Activated CD8-positive, alpha-beta T cell treated with anti-CD3 and anti-CD28 coated beads, Interleukin-2, amount 10 ng/mL, durations not matched to agents 7 days and 5 days (primary cell): ENCODE measurements at regions of chr19 and their contacts with region 1.

Region 1: GRCh38 chr19:18044825-18045304 is 36.9 kb downstream of the ARRDC2 start:
- DNase-seq: peak; percentile 96
- ATAC-seq: peak; percentile 98
- H3K4me3 Mint-ChIP-seq: peak overlapping the region; percentile 58
- H3K27ac Mint-ChIP-seq: peak overlapping the region; percentile 88
- H3K4me1 Mint-ChIP-seq: peaks cover 34% of the 10 kb centered on the region
- H3K27me3 Mint-ChIP-seq: peaks cover 10% of the 10 kb centered on the region

Region 2: GRCh38 chr19:18007044-18007916 is 37.6 kb before region 1 on chr19:
- CTCF ChIA-PET with region 1: interaction called, 32 read pairs
- POLR2A ChIA-PET with region 1: interaction called, 6 read pairs
- DNase-seq: peak; percentile 82
- ATAC-seq: peak; percentile 74
- H3K4me3 Mint-ChIP-seq: peak overlapping the region; percentile 74
- H3K27ac Mint-ChIP-seq: peak overlapping the region; percentile 68
- H3K4me1 Mint-ChIP-seq: peaks cover 39% of the 10 kb centered on the region
- H3K27me3 Mint-ChIP-seq: no peaks in the 10 kb centered on the region

Region 3: DNA sequence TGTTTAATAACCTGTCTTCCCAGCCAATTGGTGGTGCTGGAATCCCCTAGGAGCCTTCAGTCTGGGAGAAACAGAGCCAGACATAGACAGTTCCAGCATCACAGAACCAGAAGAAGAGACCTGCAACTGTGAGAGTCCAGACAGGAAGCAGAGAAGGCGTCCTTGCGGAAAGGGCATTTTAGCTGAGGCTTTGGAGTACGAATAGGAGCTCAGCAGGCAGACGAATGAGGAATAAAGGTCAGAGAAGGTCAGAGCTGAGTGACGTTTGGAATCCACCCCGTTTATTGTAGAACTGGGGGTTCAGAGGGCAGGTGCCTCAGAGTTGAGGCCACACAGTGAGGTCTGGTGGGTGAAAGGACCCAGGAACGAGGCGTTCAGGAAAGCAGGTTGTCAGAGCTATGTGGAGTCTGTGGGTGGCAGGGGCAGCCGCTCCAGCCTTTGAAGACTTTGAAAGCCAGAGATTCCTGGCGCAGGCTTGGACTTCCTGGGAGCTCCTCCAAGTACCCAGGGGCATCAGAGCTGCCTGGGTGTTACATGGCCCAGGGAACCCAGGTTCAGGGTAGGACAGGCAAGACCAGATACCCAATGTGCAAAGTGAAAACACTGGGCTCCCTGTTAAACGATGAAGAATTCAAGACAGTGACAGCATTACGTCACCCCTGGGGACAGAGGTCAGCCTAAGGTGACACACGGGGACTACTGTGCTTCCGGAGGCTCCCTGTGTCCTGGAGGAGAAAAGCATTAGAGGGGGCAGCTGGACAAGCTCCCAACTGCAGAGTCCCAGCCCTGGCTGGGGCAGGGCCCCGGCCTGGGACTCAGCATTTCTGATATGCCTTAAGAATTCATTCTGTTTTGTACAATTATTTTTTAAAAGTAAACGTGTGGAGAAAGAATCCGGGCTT is 31.4 kb before region 1 on chr19:
- CTCF ChIA-PET with region 1: interaction called, 32 read pairs
- POLR2A ChIA-PET with region 1: interaction called, 11 read pairs
- DNase-seq: no peak
- ATAC-seq: peak; percentile 17
- H3K4me3 Mint-ChIP-seq: peak overlapping the region; percentile 47
- H3K27ac Mint-ChIP-seq: peak overlapping the region; percentile 87
- H3K4me1 Mint-ChIP-seq: peaks cover 59% of the 10 kb centered on the region
- H3K27me3 Mint-ChIP-seq: no peaks in the 10 kb centered on the region

Region 4: GRCh38 chr19:18021121-18021755 is 23.6 kb before region 1 on chr19:
- CTCF ChIA-PET with region 1: interaction called, 21 read pairs
- POLR2A ChIA-PET with region 1: interaction called, 30 read pairs
- DNase-seq: peak; percentile 47
- ATAC-seq: no peak
- H3K4me3 Mint-ChIP-seq: peak overlapping the region; percentile 56
- H3K27ac Mint-ChIP-seq: peak overlapping the region; percentile 84
- H3K4me1 Mint-ChIP-seq: peaks cover 67% of the 10 kb centered on the region
- H3K27me3 Mint-ChIP-seq: no peaks in the 10 kb centered on the region

Region 5: DNA sequence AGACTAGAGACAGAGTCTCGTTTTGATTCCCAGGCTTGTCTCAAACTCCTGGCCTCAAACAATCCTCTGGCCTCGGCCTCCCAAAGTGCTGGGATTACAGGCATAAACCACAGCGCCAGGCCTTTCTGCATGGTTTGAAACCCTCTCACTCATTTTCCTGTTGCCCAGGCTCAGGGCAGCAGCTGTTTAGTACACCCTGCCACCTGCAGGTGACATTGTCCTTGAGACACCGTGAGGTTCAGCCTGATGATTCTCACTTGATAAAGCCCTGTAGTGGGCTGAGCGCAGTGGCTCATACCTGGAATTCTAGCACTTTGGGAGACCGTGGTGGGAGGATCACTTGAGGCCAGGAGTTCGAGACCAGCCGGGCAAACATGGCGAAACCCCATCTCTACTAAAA is 29.3 kb after region 1 on chr19:
- CTCF ChIA-PET with region 1: no interaction called
- POLR2A ChIA-PET with region 1: no interaction called
- DNase-seq: no peak
- ATAC-seq: no peak
- H3K4me3 Mint-ChIP-seq: no peak overlapping the region
- H3K27ac Mint-ChIP-seq: peak overlapping the region; percentile 74
- H3K4me1 Mint-ChIP-seq: peaks cover 18% of the 10 kb centered on the region
- H3K27me3 Mint-ChIP-seq: no peaks in the 10 kb centered on the region

Region 6: DNA sequence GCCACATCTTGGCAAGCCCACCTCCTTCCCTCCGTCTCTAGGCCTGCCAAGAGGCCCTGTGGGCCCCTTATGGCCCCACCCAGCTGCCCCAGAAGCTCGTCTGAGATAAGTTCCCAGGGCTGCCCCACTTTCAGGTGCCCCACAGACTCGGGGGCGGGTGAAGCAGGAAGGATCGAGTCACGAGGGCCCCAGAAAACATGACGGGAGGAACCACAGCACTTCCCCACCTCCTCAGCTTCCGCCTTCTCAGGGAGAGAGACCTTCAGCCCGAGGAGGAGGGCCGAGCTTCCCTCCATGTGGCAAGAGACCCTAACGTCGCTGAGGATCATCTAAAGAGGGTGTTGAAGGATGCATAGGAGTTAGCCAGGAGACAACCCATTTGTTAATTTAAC is 46.3 kb after region 1 on chr19:
- CTCF ChIA-PET with region 1: no interaction called
- POLR2A ChIA-PET with region 1: no interaction called
- DNase-seq: peak; percentile 90
- ATAC-seq: peak; percentile 67
- H3K4me3 Mint-ChIP-seq: peak overlapping the region; percentile 38
- H3K27ac Mint-ChIP-seq: peak overlapping the region; percentile 99
- H3K4me1 Mint-ChIP-seq: peaks cover 68% of the 10 kb centered on the region
- H3K27me3 Mint-ChIP-seq: no peaks in the 10 kb centered on the region

Region 7: DNA sequence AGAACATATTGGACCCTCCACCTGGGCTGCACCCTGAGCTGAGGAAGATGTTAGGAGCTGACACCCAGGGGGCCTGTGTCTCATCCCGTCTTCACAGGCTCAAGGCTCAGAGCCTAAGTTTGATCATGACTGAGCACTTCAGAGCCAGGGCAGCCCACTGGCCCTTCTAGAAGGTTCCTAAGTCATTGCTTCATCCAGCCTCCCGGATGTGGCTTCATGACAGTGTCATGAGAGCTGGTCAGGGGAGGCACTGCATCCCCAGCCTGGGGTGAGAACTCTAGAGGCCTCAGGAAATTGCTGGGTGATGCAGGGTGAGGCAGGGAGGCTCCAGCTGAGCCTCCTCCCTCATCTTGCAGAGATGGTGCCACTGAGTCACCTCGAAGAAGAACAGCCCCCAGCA is 83.2 kb after region 1 on chr19:
- CTCF ChIA-PET with region 1: no interaction called
- POLR2A ChIA-PET with region 1: no interaction called
- DNase-seq: peak; percentile 46
- ATAC-seq: peak; percentile 47
- H3K4me3 Mint-ChIP-seq: no peak overlapping the region
- H3K27ac Mint-ChIP-seq: peak overlapping the region; percentile 81
- H3K4me1 Mint-ChIP-seq: peaks cover 12% of the 10 kb centered on the region
- H3K27me3 Mint-ChIP-seq: no peaks in the 10 kb centered on the region